ENCODE measurements at regions of chr9 and their contacts with region 1.

Region 1: GRCh38 chr9:116632990-116633838 is 53.9 kb upstream of the TRIM32 start:
- DNase-seq: no peak
- ATAC-seq: no peak
- H3K4me3 ChIP-seq: no peak overlapping the region
- H3K27ac ChIP-seq: no peak overlapping the region
- H3K4me1 ChIP-seq: no peaks in the 10 kb centered on the region; the same call in 2 of the 3 replicates
- CTCF ChIP-seq: no peak
- EP300 ChIP-seq: no peak
- POLR2A ChIP-seq: no peak
- RAD21 ChIP-seq: no peak

Region 2: DNA sequence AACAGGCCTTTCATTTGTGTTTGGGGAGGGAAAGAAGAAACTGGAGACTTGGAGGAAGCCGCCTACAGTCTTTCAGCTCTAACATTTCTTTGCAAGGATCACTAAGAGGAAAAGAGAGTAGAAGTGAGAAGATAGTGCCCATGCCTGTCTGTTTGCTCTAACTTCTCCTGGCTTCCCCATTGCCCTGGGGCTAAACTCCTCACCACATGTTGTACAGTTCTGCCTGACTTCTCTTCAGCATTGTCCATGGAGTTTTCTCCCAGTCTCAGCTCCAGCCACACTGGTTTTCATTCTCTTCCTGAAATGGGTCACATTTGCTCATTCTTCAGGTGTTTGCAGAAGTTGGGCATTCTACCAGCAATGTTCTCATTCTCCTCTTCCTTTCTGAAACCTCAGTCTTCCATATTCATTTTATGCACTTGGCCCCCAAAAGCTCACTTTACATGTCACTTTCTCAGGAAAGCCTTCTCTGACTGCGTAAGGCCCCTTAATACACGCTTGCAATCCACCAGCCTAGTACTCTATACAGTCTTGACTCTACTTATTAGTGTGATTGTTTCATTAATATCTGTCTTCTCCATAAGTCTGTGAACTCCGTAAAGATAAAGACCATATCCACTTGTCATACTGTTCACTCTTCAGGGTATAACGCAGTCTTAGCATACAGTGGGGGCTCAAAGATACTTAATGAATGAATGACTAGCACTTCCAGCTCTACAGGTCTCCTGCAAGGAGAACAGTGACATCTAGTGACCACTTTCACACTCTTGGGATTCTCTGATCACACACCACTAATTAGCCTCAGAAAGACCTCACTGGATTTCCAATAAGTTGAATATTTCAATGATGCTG is 13.7 kb after region 1 on chr9:
- CTCF ChIA-PET with region 1: interaction called, 34 read pairs
- POLR2A ChIA-PET with region 1: no interaction called
- DNase-seq: peak; percentile 21 to 53
- ATAC-seq: peak; percentile 90 to 95
- H3K4me3 ChIP-seq: no peak overlapping the region
- H3K27ac ChIP-seq: peak overlapping the region; percentile 47 to 64
- H3K4me1 ChIP-seq: peaks cover 7% of the 10 kb centered on the region; the same call in 2 of the 3 replicates
- CTCF ChIP-seq: peak; percentile 91
- EP300 ChIP-seq: no peak
- POLR2A ChIP-seq: no peak
- RAD21 ChIP-seq: peak; percentile 82 to 84

Measured in A549 (cell line).